Posterior vena cava (tissue), 2 donors: ENCODE measurements at regions of chr3 and their contacts with region 1.

Region 1: GRCh38 chr3:30779686-30780287 is 114.7 kb downstream of the GADL1 start:
- DNase-seq: no peak

Region 2: GRCh38 chr3:30871720-30872119 is 91.9 kb after region 1 on chr3:
- intact Hi-C with region 1: loop called in 1 of 2 experiments (anchors 10 kb)
- DNase-seq: no peak